ENCODE measurements at regions of chr12 and their contacts with region 1.

Region 1: DNA sequence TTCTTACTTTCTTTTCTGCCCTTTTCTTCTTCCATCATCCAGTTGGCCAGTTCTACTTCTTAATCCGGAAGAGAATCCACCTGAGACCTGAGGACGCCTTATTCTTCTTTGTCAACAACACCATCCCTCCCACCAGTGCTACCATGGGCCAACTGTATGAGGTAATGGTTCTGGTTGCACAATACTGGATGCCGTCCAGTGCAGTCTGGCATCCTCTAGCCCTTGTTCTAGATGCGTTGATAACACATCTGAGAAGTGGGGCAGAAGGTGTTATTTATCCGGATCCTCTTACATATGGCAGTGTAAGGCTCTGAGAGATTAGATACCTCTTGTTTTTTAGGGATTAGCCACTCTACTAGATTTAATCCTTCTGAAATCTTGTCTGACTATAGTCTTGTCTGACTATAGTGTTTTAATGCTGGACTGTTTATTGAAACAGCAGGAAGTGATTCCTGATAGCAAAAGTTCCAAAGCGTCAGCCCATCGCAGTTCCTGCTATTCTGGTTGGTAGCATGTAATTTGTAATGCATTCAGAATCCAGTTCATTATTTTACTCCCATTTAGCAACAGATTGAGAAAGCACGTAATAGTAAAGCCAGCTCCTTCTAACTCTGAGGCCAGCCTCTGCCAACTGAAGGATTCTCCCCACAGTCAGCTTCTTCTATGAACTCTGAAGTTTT is 7.9 kb downstream of the GABARAPL1 start:
- DNase-seq: peak; percentile 80
- ATAC-seq: peak; percentile 95 to 96

Region 2: DNA sequence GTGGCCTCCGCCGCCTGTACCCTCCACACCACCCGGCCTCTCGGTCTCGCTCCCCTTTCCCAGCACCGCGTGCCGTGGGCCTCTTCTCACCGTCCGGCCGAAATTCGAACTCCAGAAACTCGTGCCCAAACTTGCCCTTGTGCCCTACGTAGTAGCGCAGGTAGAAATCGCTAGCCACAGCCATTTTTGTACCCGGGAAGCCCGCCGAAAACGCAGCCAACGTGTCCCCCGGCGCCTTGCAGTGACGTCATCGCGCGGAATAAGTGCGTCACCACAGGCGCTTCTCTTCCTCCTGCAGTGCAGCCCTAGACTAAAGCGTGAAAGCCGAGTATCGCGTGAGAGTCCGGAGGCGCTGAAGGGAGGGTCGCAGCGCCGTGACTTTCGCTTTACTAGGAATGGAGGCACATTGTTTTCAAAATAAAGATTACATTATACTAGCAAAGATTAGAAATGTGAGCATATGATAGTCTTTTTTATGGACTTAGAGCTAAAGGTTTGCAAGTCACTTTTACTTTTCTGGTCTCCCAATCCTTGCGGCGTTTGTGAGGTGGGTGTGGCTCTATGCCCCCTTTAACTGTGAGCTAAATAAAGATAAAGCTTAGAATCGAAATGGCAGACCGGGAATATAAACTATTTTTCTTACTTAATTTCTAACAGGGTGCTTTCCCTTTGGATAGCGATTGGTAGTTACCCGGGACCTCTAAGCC is 393.0 kb after region 1 on chr12 and contains the start of gene MAGOHB:
- intact Hi-C with region 1: no loop called
- DNase-seq: peak; percentile 95
- ATAC-seq: peak; percentile 100
- total RNA-seq, gene MAGOHB: 13.6 to 18.4 TPM

Region 3: GRCh38 chr12:10716704-10717315 is 496.3 kb after region 1 on chr12:
- intact Hi-C with region 1: loop called in 1 of 2 experiments (anchors 10 kb)
- DNase-seq: peak; percentile 90
- ATAC-seq: peak; percentile 89 to 96

Region 4: DNA sequence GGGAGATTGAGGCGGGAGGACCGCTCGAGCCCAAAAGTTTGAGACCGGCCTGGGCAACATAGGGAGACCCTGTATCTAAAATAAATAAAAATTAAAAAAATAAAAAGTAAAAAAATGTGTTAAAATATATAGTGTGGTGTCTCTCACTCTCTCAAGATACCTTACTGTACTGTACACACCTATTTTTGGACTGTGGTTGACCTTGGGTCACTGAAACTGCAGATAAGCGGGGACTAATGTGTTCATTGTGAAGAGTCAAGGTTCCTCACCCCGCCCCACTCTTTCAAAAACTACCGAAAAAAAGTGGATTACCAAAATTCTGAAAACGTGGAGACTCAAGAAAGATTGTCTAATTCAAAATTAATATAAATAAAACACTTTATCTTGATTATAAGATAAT is 689.8 kb after region 1 on chr12:
- intact Hi-C with region 1: no loop called
- DNase-seq: no peak
- ATAC-seq: no peak